PC-9 (cell line): ENCODE measurements at regions of chr9 and their contacts with region 1.

Region 1: DNA sequence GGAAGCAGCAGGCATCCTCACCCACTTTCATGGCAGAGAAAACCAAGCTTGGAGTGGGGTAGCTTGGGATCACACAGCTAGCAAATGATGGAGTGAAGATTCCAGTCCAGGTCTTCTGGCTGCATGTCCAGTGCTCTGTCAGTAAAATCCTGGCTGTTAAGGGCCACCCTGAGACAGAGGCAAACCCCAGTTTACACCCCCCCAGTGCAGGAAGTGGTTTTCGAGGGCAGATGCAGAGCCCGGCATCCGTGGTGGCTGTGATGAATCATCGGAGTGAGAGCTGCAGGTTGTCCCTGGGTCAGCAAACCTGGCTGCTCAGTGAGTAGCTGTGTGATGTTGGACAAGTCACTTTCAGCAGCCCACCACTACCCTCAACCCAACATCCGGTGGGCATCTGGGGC is 115.4 kb downstream of the RGS3 start:
- DNase-seq: peak; percentile 91 to 92
- H3K4me3 ChIP-seq: peak overlapping the region; percentile 45; the same call in 1 of the 2 replicates
- H3K27ac ChIP-seq: peak overlapping the region; percentile 93
- H3K4me1 ChIP-seq: peaks cover 73% of the 10 kb centered on the region
- H3K27me3 ChIP-seq: no peaks in the 10 kb centered on the region
- CTCF ChIP-seq: no peak

Region 2: DNA sequence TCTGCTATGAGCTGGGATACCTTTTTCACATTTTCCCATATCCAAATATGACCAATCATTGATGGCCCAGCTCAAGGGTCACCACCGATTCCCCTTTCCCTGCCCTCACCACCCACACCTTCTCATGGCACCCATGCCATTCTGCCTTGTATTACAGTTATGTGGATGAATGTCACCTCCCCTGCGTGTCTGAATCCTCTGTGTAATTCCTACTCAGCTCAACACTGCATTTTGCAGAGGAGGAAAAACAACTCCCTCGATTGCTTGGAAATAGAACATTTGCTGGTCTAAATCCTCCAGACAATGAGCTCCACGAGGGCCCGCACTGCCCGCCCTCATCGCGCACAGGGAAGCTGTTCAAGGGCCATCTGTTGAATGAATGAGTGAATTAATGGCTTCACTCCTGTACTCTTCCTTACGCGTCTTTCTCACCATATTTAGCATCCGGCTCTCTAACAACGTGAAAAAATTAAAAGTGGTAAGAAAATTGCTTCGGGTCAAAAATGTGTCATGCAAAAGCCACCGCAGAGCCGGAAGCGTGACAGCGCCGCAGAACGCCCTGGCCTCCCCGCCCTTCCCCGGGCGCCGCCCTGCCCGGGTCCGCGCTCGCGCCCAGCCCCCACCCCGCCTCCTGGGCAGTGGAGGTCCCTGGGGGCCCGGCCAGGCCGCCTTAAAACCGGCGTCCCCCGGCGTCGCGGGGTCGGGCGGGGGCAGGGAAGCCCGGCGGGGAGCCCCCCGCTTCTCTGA is 1404.5 kb before region 1 on chr9:
- CTCF ChIA-PET with region 1: interaction called, 12 read pairs
- POLR2A ChIA-PET with region 1: no interaction called
- intact Hi-C with region 1: no loop called
- DNase-seq: peak; percentile 81
- H3K4me3 ChIP-seq: peak overlapping the region; percentile 84; the same call in 1 of the 2 replicates
- H3K27ac ChIP-seq: peak overlapping the region; percentile 86
- H3K4me1 ChIP-seq: peaks cover 63% of the 10 kb centered on the region
- H3K27me3 ChIP-seq: no peaks in the 10 kb centered on the region
- CTCF ChIP-seq: no peak

Region 3: DNA sequence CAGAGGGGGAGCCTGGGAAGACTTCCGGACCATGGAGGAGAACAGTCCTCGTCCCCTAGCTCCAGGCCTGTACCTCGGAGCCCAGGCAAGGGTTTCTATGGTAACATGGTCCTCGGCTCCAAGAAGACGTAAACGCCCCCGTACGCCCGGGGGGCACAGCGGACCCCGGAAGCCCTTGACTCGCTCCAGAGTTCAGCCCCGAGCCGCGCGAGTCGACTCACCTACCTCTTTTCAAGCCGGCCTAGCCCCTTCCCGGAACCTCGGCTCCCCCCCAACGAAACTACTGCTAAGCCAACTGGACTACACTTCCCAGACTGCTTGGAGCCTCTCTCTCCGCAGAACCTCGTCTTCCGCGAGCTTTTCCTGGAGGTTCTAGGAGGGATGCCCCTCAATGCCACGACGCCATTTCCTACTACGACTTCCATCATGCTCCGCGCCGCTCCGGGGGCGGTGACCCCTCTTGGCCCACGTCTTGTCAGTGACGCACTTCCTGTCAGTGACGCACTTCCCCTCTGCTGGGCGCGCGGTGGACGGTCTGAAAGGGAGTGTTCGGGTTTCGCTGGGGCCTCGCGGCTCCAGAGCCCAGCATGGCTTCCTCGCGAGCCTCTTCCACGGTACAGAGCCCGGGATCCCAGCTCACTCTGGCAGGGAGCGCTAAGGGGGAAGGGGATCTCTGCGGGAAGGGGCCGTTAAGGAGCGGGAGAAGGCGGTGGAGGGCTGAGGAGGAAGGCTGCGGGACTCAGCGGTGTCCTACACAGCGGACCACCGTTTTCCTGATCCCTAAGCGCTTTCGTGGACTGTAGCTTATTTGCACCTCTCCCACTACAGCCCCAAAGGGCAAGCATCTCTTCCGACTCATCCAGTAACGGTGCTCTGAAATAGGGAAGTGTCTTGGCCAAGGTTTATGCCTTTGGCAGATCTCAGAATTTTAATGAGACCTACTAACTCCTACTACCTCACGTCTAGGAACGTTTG is 303.4 kb before region 1 on chr9 and contains the starts of genes CDC26 and PRPF4:
- CTCF ChIA-PET with region 1: interaction called, 3 read pairs
- POLR2A ChIA-PET with region 1: interaction called, 3 read pairs
- intact Hi-C with region 1: loop called (anchors 2 kb)
- DNase-seq: peak; percentile 90 to 94
- H3K4me3 ChIP-seq: peak within 1 kb of the TSS; percentile 81
- H3K27ac ChIP-seq: peak within 1 kb of the TSS; percentile 50
- H3K4me1 ChIP-seq: peaks cover 13% of the 10 kb centered on the region
- H3K27me3 ChIP-seq: no peaks in the 10 kb centered on the region
- CTCF ChIP-seq: no peak
- total RNA-seq, gene CDC26: 40.4 and 43.4 TPM in 2 replicates
- total RNA-seq, gene PRPF4: 31.6 and 36.3 TPM in 2 replicates

Region 4: DNA sequence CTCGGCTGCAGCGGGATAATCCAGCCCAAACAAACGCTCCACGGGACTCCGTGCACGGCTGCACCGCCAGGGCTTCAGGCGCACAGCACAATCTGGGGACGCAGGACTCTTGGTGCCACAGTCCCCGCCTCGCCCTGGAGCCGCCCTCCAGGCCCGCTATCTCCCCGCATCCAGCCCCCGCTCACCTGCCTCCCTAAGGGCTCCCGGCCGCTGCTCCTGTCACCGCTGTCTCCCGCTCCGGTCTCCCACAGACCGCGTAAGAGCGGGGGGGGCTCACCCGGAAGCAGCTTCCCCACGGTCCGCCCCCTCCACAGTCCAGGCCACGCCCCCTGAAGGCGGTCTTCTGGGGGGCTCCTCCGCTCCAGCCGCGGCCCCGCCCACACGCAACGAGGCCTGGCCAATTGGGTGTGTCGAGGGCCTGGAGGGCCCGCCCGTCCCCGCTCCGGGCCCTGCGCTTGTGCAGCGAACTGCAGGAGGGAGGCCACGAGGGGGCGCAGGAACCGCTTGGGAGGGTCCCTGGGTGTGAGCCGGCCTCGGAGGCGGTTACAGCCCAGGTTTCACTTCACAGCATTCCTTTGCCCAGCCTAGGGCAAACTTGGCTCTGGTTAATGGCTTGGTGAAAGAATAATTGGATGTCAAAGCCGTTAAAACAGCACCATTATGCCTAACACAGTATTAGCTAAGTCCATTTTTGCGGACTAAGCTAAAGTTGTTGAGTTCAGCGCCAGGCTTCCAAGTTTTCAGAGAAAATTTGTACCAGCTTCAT is 177.7 kb before region 1 on chr9 and contains the start of gene ALAD:
- CTCF ChIA-PET with region 1: no interaction called
- POLR2A ChIA-PET with region 1: no interaction called
- intact Hi-C with region 1: loop called (anchors 5 kb)
- DNase-seq: peak; percentile 93 to 100
- H3K4me3 ChIP-seq: peak within 1 kb of the TSS; percentile 75
- H3K27ac ChIP-seq: peak within 1 kb of the TSS; percentile 14; the same call in 1 of the 2 replicates
- H3K4me1 ChIP-seq: peaks cover 32% of the 10 kb centered on the region
- H3K27me3 ChIP-seq: no peaks in the 10 kb centered on the region
- CTCF ChIP-seq: peak; percentile 89
- total RNA-seq, gene ALAD: 33.3 and 42.7 TPM in 2 replicates

Region 5: DNA sequence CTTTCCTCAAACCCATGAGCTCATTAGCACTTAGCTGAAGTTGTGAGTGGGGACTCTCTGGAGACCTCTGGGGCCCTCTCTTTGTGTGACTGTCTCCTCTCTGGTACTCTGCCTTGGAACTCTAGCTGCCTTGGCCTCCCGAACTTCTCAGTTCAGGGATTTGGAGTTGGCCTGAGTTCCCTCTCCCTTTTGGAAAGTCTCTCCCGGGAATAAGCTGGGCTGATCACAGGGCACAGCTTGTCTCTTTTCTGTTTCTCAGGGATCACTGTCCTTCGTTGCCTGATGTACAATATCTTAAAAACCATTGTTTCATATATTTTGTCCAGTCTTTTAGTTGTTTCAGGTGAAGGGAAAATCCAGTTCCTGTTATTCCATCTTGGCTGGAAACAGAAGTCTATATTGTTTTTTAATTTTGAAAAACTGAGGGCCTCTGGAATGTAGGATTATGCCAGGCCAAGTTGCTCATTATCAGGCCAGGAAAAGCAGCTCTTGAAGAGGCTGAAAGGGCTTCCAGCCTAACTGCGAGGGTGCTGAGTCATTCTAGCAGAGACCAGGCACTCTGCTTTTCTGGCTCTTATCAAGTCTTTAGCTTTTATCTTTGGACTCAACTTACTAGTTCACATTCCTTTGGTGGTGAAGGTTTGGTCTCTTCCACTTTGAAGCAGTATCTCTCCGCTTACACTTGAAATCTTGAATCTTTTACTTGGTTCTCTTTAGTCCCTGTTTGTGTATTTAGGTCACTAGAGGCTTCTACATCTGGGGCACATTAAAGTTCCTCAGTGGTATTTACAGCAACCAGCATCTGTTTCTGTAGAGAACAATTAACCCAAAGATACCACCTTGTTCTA is 123.7 kb before region 1 on chr9:
- CTCF ChIA-PET with region 1: interaction called, 4 read pairs
- POLR2A ChIA-PET with region 1: interaction called, 5 read pairs
- intact Hi-C with region 1: loop called (anchors 1 kb)
- DNase-seq: peak; percentile 68 to 79
- H3K4me3 ChIP-seq: no peak overlapping the region
- H3K27ac ChIP-seq: peak overlapping the region; percentile 85
- H3K4me1 ChIP-seq: peaks cover 28% of the 10 kb centered on the region
- H3K27me3 ChIP-seq: no peaks in the 10 kb centered on the region
- CTCF ChIP-seq: no peak

Region 6: GRCh38 chr9:113564498-113565237 is 14.2 kb before region 1 on chr9:
- CTCF ChIA-PET with region 1: no interaction called
- POLR2A ChIA-PET with region 1: interaction called, 3 read pairs
- intact Hi-C with region 1: loop called (anchors 1 kb)
- DNase-seq: peak; percentile 46 to 74
- H3K4me3 ChIP-seq: peak overlapping the region; percentile 69
- H3K27ac ChIP-seq: peak overlapping the region; percentile 90
- H3K4me1 ChIP-seq: peaks cover 25% of the 10 kb centered on the region
- H3K27me3 ChIP-seq: no peaks in the 10 kb centered on the region
- CTCF ChIP-seq: no peak